Body of pancreas (tissue), 4 donors: ENCODE measurements at regions of chr14 and their contacts with region 1.

Region 1: GRCh38 chr14:22386924-22387775 is 201.9 kb downstream of the DAD1 start:
- DNase-seq: peak; percentile 69 to 76 (median 74)
- ATAC-seq: peak; percentile 45
- H3K4me3 ChIP-seq: no peak overlapping the region
- H3K27ac ChIP-seq: no peak overlapping the region
- H3K4me1 ChIP-seq: peaks cover 2% of the 10 kb centered on the region
- H3K27me3 ChIP-seq: no peaks in the 10 kb centered on the region
- CTCF ChIP-seq: peak; percentile 64 to 85 (median 80)
- POLR2A ChIP-seq: no peak

Region 2: DNA sequence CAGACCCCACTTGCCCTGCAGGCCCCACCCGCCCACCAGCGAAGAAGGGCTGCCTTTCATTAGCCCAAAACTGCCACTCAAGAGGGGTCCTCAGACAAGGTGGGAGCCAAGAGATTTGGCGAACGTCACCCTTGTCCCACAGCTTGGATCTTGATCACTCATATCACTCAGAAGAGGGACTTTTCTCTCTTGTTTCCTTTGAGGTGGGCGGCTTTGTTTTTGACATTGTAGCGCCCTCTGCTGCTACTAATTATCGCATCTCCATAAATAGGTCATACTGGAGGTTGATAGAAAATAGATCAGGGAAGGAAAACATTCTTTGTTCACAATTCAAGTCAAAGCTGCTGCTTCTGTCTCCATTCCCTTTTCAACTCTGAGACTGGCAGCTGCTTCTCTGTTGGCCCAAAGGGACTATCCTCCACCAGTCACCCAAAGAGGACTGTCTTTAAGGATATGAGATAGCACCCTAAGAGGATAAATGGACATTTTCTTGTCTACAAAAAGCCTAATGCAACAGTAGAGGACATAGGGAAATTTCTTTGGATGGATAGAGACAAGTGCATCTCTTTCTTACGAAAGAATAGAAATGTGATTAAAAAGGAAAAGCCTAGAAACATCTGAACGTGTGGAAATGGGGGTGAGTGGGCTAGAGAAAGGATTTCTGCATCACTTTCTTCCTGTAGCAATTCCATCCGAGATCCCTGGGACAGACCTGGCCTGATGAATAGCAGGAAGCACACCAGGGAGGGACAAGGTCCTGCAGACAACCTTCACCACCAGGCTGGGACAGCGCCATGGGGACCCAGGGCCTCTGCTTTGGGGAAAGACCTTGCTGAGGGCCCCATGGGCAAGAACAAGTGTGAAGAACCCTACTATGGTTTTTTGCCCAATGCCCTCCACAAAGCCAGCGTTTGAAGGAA is 86.0 kb after region 1 on chr14:
- intact Hi-C with region 1: loop called (anchors 2 kb)
- DNase-seq: peak; percentile 54 to 65 (median 60)
- ATAC-seq: peak; percentile 62
- H3K4me3 ChIP-seq: no peak overlapping the region
- H3K27ac ChIP-seq: no peak overlapping the region
- H3K4me1 ChIP-seq: no peaks in the 10 kb centered on the region
- H3K27me3 ChIP-seq: no peaks in the 10 kb centered on the region
- CTCF ChIP-seq: peak; percentile 21 to 85 (median 75)
- POLR2A ChIP-seq: no peak